ENCODE measurements at regions of chr6 and their contacts with region 1.

Region 1: DNA sequence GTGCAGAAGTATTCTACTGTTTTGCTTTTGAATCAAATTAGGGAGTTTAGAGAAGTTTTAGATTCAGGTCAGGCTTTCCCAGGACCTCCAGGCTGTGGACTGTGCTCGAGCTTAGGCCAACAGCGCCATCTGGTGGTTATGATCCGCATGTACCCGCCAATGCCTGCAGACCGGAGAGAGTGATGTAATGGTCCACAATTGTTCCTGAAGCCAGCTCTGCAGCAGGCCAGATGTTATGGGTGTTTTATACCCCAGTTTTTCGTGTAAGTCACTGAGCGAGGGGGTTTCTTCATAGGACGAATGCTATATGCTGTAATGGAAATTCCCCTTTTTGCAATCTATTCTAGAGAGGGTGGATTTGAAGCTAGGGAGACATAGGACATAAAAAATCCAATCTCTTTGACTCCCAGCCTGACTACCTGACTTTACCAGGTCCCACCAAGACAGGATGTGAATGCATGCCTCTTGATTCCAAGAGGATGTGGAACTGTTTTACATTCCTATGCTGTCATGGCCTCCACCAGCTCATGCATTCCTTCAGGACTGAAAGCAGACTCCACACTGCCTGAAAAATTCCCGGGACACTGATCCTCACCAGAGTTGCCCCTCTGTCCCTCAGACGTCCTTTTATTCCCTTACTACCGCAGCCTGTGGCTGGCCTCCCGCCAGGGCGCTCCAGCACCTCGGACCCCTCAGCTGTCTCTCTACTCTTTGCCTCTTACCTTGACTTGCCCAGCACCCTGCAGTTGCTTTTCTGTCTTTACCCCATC is 41.2 kb upstream of the LY86 start:
- DNase-seq: peak; percentile 70 to 89 (median 77)
- ATAC-seq: peak; percentile 90
- H3K4me3 ChIP-seq: peak overlapping the region; percentile 51
- H3K4me3 Mint-ChIP-seq: peak overlapping the region; percentile 59
- H3K27ac ChIP-seq: no peak overlapping the region
- H3K27ac Mint-ChIP-seq: no peak overlapping the region
- H3K4me1 ChIP-seq: peaks cover 13% of the 10 kb centered on the region
- H3K4me1 Mint-ChIP-seq: peaks cover 5% of the 10 kb centered on the region
- H3K27me3 ChIP-seq: peaks cover 25 to 34% of the 10 kb centered on the region in 2 experiments
- H3K27me3 Mint-ChIP-seq: peaks cover 54% of the 10 kb centered on the region
- CTCF ChIP-seq: peak; percentile 94

Region 2: GRCh38 chr6:6057424-6058053 is 489.8 kb before region 1 on chr6:
- CTCF ChIA-PET with region 1: no interaction called
- POLR2A ChIA-PET with region 1: no interaction called
- intact Hi-C with region 1: loop called in 1 of 2 experiments (anchors 2 kb)
- DNase-seq: peak in 3 of 14 experiments; percentile 31 to 54 (median 41)
- ATAC-seq: no peak
- H3K4me3 ChIP-seq: no peak overlapping the region
- H3K4me3 Mint-ChIP-seq: no peak overlapping the region
- H3K27ac ChIP-seq: no peak overlapping the region
- H3K27ac Mint-ChIP-seq: no peak overlapping the region
- H3K4me1 ChIP-seq: no peaks in the 10 kb centered on the region
- H3K4me1 Mint-ChIP-seq: no peaks in the 10 kb centered on the region
- H3K27me3 ChIP-seq: peaks cover 5 to 34% of the 10 kb centered on the region in 2 experiments
- H3K27me3 Mint-ChIP-seq: peaks cover 69% of the 10 kb centered on the region
- CTCF ChIP-seq: peak; percentile 60

Region 3: DNA sequence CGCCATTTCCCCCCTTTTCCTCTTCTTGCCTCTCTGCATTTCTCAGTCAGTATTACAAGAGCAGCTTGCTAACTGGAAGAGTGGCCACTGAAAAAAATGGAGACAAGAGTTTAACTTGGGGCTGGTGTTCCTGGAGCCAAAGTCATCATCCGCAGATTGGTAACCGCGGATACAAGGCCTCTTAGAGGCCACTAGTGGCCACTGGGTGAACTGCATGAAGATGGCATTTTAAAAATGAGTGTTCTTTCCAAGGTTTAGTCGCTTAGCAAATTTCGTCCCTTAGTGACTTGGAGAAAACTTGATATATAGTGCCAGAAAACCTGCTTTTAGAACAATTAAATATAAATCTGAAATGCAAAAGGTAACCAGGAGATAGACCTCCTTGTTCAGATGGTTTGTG is 231.6 kb before region 1 on chr6:
- CTCF ChIA-PET with region 1: no interaction called
- POLR2A ChIA-PET with region 1: no interaction called
- intact Hi-C with region 1: loop called in 1 of 2 experiments (anchors 10 kb)
- DNase-seq: peak in 7 of 14 experiments; percentile 2 to 47 (median 20)
- ATAC-seq: no peak
- H3K4me3 ChIP-seq: no peak overlapping the region
- H3K4me3 Mint-ChIP-seq: no peak overlapping the region
- H3K27ac ChIP-seq: no peak overlapping the region
- H3K27ac Mint-ChIP-seq: no peak overlapping the region
- H3K4me1 ChIP-seq: no peaks in the 10 kb centered on the region
- H3K4me1 Mint-ChIP-seq: no peaks in the 10 kb centered on the region
- H3K27me3 ChIP-seq: peaks cover 18 to 34% of the 10 kb centered on the region in 2 experiments
- H3K27me3 Mint-ChIP-seq: peaks cover 62% of the 10 kb centered on the region
- CTCF ChIP-seq: peak; percentile 70

Region 4: DNA sequence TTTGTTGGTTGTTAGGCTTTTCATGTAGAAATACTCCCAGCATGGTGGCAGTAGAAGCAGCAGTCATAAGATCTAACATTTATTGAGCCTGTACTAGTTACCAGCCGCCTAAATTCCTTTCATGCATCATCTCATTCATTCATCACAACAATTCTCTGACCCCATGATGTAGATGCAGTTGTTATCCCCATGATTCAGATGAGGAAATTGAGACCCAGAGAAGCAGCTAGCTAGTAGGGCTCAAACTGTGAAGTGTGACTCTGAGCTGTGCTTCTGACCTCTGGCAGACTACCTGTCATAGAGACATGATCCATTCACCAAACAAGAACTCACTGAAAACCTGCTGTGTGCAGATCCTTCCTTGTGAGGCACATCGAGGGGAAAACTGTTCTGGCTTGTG is 577.3 kb after region 1 on chr6:
- CTCF ChIA-PET with region 1: no interaction called
- POLR2A ChIA-PET with region 1: no interaction called
- intact Hi-C with region 1: no loop called
- DNase-seq: no peak
- ATAC-seq: no peak
- H3K4me3 ChIP-seq: no peak overlapping the region
- H3K4me3 Mint-ChIP-seq: no peak overlapping the region
- H3K27ac ChIP-seq: no peak overlapping the region
- H3K27ac Mint-ChIP-seq: peak overlapping the region; percentile 18
- H3K4me1 ChIP-seq: peaks cover 52% of the 10 kb centered on the region
- H3K4me1 Mint-ChIP-seq: peaks cover 72% of the 10 kb centered on the region
- H3K27me3 ChIP-seq: no peaks in the 10 kb centered on the region
- H3K27me3 Mint-ChIP-seq: no peaks in the 10 kb centered on the region
- CTCF ChIP-seq: no peak

Measured in CD4-positive, alpha-beta T cell (primary cell).